ENCODE measurements at regions of chr1 and their contacts with region 1.

Region 1: DNA sequence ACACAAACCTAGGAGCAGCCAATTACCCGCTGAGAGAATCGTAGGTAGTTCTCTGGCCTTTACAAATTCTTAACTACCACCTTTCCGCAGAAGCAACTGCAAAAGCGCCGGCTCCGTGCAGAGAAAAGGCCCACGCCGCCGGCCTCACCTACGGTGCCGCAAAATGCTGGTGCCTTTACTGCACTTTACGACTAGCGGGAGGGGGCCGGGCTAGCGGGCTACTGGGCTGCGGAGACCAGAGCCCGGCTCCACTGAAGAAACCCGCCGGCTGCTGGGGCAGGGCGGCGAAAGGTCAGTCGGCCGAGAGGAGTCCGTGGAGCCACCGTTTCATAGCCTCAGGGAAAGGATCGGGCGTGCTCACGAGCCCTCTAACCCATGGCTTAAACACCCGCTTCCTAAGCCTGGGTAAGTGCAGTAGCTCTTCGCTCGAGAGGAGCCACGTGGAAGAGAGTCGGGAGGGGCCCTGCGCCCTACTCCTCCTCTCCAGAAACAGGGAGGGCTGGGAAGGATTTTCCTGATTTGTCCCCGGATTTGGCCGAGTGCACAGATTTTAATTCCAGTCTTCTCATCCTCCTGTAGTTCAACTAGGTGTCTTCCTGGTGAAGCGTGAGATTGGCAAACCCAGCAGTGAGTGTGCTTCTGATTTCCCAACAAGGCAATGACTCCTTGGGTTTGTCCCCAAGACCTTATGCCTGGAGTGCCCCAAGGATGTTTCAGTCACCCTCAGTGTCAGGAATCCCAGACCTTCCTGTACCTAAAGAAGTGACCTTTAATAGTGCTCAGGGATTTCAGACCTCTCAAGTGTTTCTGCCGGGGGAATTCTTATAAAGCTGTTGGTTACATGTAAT is at the start of gene DPH5:
- DNase-seq: peak; percentile 73 to 91 (median 88)
- ATAC-seq: peak; percentile 95
- H3K4me3 ChIP-seq: peak within 1 kb of the TSS; percentile 75 to 96
- H3K4me3 Mint-ChIP-seq: peak within 1 kb of the TSS; percentile 90
- H3K27ac ChIP-seq: peak within 1 kb of the TSS; percentile 71 to 77
- H3K27ac Mint-ChIP-seq: peak within 1 kb of the TSS; percentile 98
- H3K4me1 ChIP-seq: peaks cover 52% of the 10 kb centered on the region
- H3K4me1 Mint-ChIP-seq: peaks cover 83% of the 10 kb centered on the region
- H3K27me3 ChIP-seq: no peaks in the 10 kb centered on the region
- H3K27me3 Mint-ChIP-seq: no peaks in the 10 kb centered on the region
- CTCF ChIP-seq: no peak
- total RNA-seq, gene DPH5: 32.1 to 40.7 TPM

Region 2: DNA sequence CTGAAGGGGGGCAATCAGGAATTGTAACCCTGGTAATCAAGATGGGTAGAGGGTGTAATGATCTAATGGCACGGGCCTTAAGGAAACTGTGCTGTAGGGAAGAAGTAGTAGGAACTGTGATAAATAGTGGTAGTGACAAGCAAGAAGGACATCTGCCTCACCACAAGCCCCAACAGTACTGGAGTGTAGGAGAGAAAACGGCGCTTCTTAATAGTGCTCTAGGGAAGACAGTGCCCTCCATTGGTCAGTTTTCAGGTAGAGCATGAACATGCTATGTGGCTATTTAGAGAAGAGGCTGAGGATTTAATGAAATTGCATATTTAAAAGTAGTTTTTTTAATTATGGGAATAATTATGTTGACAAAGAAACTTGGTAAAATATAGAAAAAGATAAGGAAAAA is 97.8 kb before region 1 on chr1:
- CTCF ChIA-PET with region 1: no interaction called
- POLR2A ChIA-PET with region 1: interaction called, 7 read pairs
- intact Hi-C with region 1: loop called (anchors 2 kb)
- DNase-seq: peak in 3 of 9 experiments; percentile 19 to 65 (median 48)
- ATAC-seq: no peak
- H3K4me3 ChIP-seq: peak overlapping the region in 1 of 2 experiments; percentile 13
- H3K4me3 Mint-ChIP-seq: no peak overlapping the region
- H3K27ac ChIP-seq: peak overlapping the region; percentile 40 to 78
- H3K27ac Mint-ChIP-seq: no peak overlapping the region
- H3K4me1 ChIP-seq: peaks cover 85% of the 10 kb centered on the region
- H3K4me1 Mint-ChIP-seq: peaks cover 45% of the 10 kb centered on the region
- H3K27me3 ChIP-seq: no peaks in the 10 kb centered on the region
- H3K27me3 Mint-ChIP-seq: no peaks in the 10 kb centered on the region
- CTCF ChIP-seq: no peak

Region 3: DNA sequence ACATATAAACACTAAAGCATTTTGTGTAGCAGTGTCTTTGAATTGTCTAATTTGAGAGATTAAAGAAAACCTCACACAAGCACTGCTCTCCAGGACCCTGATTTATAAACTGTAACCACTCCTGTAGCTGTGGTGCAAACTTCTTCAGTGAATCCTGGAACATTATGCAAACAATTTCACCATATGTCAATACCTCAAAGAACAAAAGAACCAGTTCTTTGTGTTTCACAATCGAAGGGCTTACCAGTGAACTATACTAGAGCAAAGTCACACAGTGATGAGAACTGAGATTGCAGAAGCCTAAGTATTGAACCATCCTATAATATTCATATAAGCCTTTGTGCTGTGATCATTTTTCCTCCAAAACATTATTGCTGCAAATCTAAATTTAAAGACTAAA is 21.8 kb before region 1 on chr1:
- CTCF ChIA-PET with region 1: interaction called, 3 read pairs
- POLR2A ChIA-PET with region 1: no interaction called
- intact Hi-C with region 1: loop called in 1 of 2 experiments (anchors 2 kb)
- DNase-seq: peak in 1 of 9 experiments; percentile 18
- ATAC-seq: peak; percentile 28
- H3K4me3 ChIP-seq: no peak overlapping the region
- H3K4me3 Mint-ChIP-seq: no peak overlapping the region
- H3K27ac ChIP-seq: peak overlapping the region in 1 of 2 experiments; percentile 5
- H3K27ac Mint-ChIP-seq: peak overlapping the region; percentile 33
- H3K4me1 ChIP-seq: peaks cover 41% of the 10 kb centered on the region
- H3K4me1 Mint-ChIP-seq: peaks cover 60% of the 10 kb centered on the region
- H3K27me3 ChIP-seq: no peaks in the 10 kb centered on the region
- H3K27me3 Mint-ChIP-seq: no peaks in the 10 kb centered on the region
- CTCF ChIP-seq: no peak

Region 4: GRCh38 chr1:101101362-101101761 is 75.5 kb after region 1 on chr1:
- CTCF ChIA-PET with region 1: no interaction called
- POLR2A ChIA-PET with region 1: no interaction called
- intact Hi-C with region 1: no loop called
- DNase-seq: no peak
- ATAC-seq: no peak
- H3K4me3 ChIP-seq: no peak overlapping the region
- H3K4me3 Mint-ChIP-seq: no peak overlapping the region
- H3K27ac ChIP-seq: no peak overlapping the region
- H3K27ac Mint-ChIP-seq: no peak overlapping the region
- H3K4me1 ChIP-seq: no peaks in the 10 kb centered on the region
- H3K4me1 Mint-ChIP-seq: no peaks in the 10 kb centered on the region
- H3K27me3 ChIP-seq: no peaks in the 10 kb centered on the region
- H3K27me3 Mint-ChIP-seq: no peaks in the 10 kb centered on the region
- CTCF ChIP-seq: no peak

Region 5: GRCh38 chr1:101136739-101137138 is 110.9 kb after region 1 on chr1:
- CTCF ChIA-PET with region 1: interaction called, 7 read pairs
- POLR2A ChIA-PET with region 1: no interaction called
- intact Hi-C with region 1: loop called in 1 of 2 experiments (anchors 5 kb)
- DNase-seq: peak in 4 of 9 experiments; percentile 21 to 78 (median 50)
- ATAC-seq: peak; percentile 76
- H3K4me3 ChIP-seq: no peak overlapping the region
- H3K4me3 Mint-ChIP-seq: peak overlapping the region; percentile 13
- H3K27ac ChIP-seq: peak overlapping the region; percentile 12 to 50
- H3K27ac Mint-ChIP-seq: peak overlapping the region; percentile 85
- H3K4me1 ChIP-seq: peaks cover 35% of the 10 kb centered on the region
- H3K4me1 Mint-ChIP-seq: peaks cover 60% of the 10 kb centered on the region
- H3K27me3 ChIP-seq: no peaks in the 10 kb centered on the region
- H3K27me3 Mint-ChIP-seq: no peaks in the 10 kb centered on the region
- CTCF ChIP-seq: peak; percentile 58

Region 6: DNA sequence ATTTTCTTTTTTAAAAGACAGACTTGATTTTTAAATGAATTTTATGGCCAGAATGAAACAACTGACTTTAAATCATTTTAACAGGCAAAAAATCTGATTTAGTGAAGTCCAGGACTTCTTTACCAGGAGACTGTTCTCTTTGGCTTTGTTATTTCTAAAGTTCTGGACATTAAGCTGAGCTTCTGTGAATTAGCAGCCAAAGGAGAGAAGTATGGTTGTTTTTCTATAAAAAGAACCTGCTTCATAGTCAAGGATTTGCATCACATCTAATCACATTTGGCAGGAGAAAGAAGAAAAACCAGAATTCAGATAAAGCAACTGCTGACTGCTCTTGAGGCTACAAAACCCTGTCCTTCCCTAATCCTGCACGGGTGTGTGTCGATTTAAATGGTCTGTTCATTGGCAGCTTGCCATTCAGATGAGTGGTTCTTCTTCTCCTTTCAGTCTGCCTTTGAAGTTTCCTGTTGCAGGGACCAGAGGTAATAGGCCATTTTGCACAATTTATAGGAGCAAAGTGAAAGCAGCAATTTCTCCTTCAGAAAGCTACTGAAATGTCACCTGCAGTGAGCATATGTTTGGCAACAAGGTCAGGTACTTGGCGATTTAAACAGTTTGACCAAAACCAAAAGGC is 755.4 kb after region 1 on chr1:
- CTCF ChIA-PET with region 1: no interaction called
- POLR2A ChIA-PET with region 1: no interaction called
- intact Hi-C with region 1: no loop called
- DNase-seq: no peak
- ATAC-seq: no peak
- H3K4me3 ChIP-seq: no peak overlapping the region
- H3K4me3 Mint-ChIP-seq: no peak overlapping the region
- H3K27ac ChIP-seq: no peak overlapping the region
- H3K27ac Mint-ChIP-seq: no peak overlapping the region
- H3K4me1 ChIP-seq: no peaks in the 10 kb centered on the region
- H3K4me1 Mint-ChIP-seq: no peaks in the 10 kb centered on the region
- H3K27me3 ChIP-seq: no peaks in the 10 kb centered on the region
- H3K27me3 Mint-ChIP-seq: peaks cover 3% of the 10 kb centered on the region
- CTCF ChIP-seq: no peak

Measured in CD8-positive, alpha-beta T cell (primary cell).